ENCODE measurements at regions of chr22 and their contacts with region 1.

Region 1: GRCh38 chr22:27438271-27438980 is 363.1 kb downstream of the MN1 start:
- DNase-seq: peak in 1 of 2 donors; percentile 67
- ATAC-seq: peak in 3 of 8 donors; percentile 17 to 35 (median 23)
- H3K4me3 ChIP-seq: peak overlapping the region in 1 of 10 donors; percentile 5
- H3K27ac ChIP-seq: peak overlapping the region in 5 of 10 donors; percentile 16 to 86 (median 37)
- H3K4me1 ChIP-seq: peaks cover 0 to 31% (median 8%) of the 10 kb centered on the region in 9 donors
- H3K27me3 ChIP-seq: peaks cover 0 to 73% (median 35%) of the 10 kb centered on the region in 7 donors
- CTCF ChIP-seq: peak in 2 of 9 donors; percentile 16 to 24

Region 2: GRCh38 chr22:27238935-27239510 is 199.4 kb before region 1 on chr22:
- intact Hi-C with region 1: loop called in 1 of 10 experiments (anchors 10 kb)
- DNase-seq: peak; percentile 82 to 87
- ATAC-seq: peak; percentile 84 to 93 (median 88)
- H3K4me3 ChIP-seq: no peak overlapping the region
- H3K27ac ChIP-seq: peak overlapping the region in 5 of 10 donors; percentile 53 to 80 (median 62)
- H3K4me1 ChIP-seq: peaks cover 0 to 32% (median 12%) of the 10 kb centered on the region in 9 donors
- H3K27me3 ChIP-seq: peaks cover 0 to 13% (median 0%) of the 10 kb centered on the region in 7 donors
- CTCF ChIP-seq: no peak

Region 3: GRCh38 chr22:27480487-27480886 is 42.1 kb after region 1 on chr22:
- intact Hi-C with region 1: loop called in 1 of 10 experiments (anchors 5 kb)
- DNase-seq: no peak
- ATAC-seq: no peak
- H3K4me3 ChIP-seq: no peak overlapping the region
- H3K27ac ChIP-seq: no peak overlapping the region
- H3K4me1 ChIP-seq: peaks cover 0 to under 1% (median 0%) of the 10 kb centered on the region in 9 donors
- H3K27me3 ChIP-seq: peaks cover 0 to 65% (median 36%) of the 10 kb centered on the region in 7 donors
- CTCF ChIP-seq: no peak

Measured in heart right ventricle (tissue), 16 donors.